K562 (cell line): ENCODE measurements at regions of chrX and their contacts with region 1.

Region 1: GRCh38 chrX:75210602-75211001 is 54.5 kb upstream of the ABCB7 start:
- DNase-seq: peak in 2 of 4 experiments; percentile 21 to 32
- ATAC-seq: peak; percentile 79
- H3K4me3 ChIP-seq: no peak overlapping the region
- H3K27ac ChIP-seq: peak overlapping the region; percentile 54; the same call in 2 of the 3 replicates
- H3K4me1 ChIP-seq: peaks cover 0 to 9% of the 10 kb centered on the region in 2 experiments; a peak in 3 of 5 replicates
- H3K27me3 ChIP-seq: no peaks in the 10 kb centered on the region
- CTCF ChIP-seq: no peak
- EP300 ChIP-seq: peak; percentile 24; the same call in 1 of the 2 replicates
- POLR2A ChIP-seq: no peak
- RAD21 ChIP-seq: no peak

Region 2: GRCh38 chrX:75045369-75045768 is 165.2 kb before region 1 on chrX:
- CTCF ChIA-PET with region 1: no interaction called
- POLR2A ChIA-PET with region 1: no interaction called
- in situ Hi-C with region 1: no loop called
- intact Hi-C with region 1: no loop called
- DNase-seq: no peak
- ATAC-seq: no peak
- H3K4me3 ChIP-seq: no peak overlapping the region
- H3K27ac ChIP-seq: no peak overlapping the region
- H3K4me1 ChIP-seq: no peaks in the 10 kb centered on the region
- H3K27me3 ChIP-seq: no peaks in the 10 kb centered on the region
- CTCF ChIP-seq: no peak
- EP300 ChIP-seq: no peak
- POLR2A ChIP-seq: no peak
- RAD21 ChIP-seq: no peak

Region 3: GRCh38 chrX:75273483-75273882 is 62.9 kb after region 1 on chrX:
- CTCF ChIA-PET with region 1: no interaction called
- POLR2A ChIA-PET with region 1: no interaction called
- in situ Hi-C with region 1: no loop called
- intact Hi-C with region 1: loop called (anchors 10 kb)
- DNase-seq: peak; percentile 17 to 44 (median 23)
- ATAC-seq: peak; percentile 62
- H3K4me3 ChIP-seq: peak overlapping the region; percentile 52
- H3K27ac ChIP-seq: peak overlapping the region; percentile 86
- H3K4me1 ChIP-seq: no peaks in the 10 kb centered on the region; a peak in 1 of 5 replicates
- H3K27me3 ChIP-seq: no peaks in the 10 kb centered on the region
- CTCF ChIP-seq: no peak
- EP300 ChIP-seq: no peak
- POLR2A ChIP-seq: no peak
- RAD21 ChIP-seq: no peak